A673 (cell line): ENCODE measurements at regions of chr4 and their contacts with region 1.

Region 1: GRCh38 chr4:133641191-133641590 is 492.1 kb downstream of the PCDH10 start:
- DNase-seq: peak; percentile 4
- H3K4me3 ChIP-seq: no peak overlapping the region
- H3K27ac ChIP-seq: no peak overlapping the region
- H3K4me1 ChIP-seq: peaks cover 21% of the 10 kb centered on the region
- H3K27me3 ChIP-seq: no peaks in the 10 kb centered on the region
- CTCF ChIP-seq: no peak

Region 2: DNA sequence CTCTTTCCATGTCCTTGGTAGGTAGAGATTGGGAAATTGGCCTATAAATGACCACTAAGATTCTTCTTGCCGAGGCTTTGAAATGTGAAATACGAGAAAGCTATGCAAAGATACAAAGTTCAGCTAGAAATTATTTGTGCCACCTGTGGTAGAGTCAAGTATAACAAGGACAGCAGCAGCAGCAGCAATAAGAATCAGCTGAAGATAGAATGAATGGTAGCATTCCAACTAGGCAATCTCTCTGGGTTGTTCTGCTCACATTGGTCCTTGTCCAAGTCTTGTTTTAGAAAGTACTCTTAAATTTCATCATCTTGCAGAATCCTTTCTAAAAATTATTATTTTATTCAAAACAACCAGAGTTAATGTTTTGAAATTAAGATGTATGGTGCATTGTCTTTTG is 559.9 kb before region 1 on chr4:
- CTCF ChIA-PET with region 1: no interaction called
- POLR2A ChIA-PET with region 1: no interaction called
- intact Hi-C with region 1: no loop called
- DNase-seq: no peak
- H3K4me3 ChIP-seq: no peak overlapping the region
- H3K27ac ChIP-seq: no peak overlapping the region
- H3K4me1 ChIP-seq: no peaks in the 10 kb centered on the region
- H3K27me3 ChIP-seq: no peaks in the 10 kb centered on the region
- CTCF ChIP-seq: no peak

Region 3: GRCh38 chr4:133154725-133155124 is 486.5 kb before region 1 on chr4:
- CTCF ChIA-PET with region 1: no interaction called
- POLR2A ChIA-PET with region 1: no interaction called
- intact Hi-C with region 1: loop called (anchors 5 kb)
- DNase-seq: peak; percentile 71
- H3K4me3 ChIP-seq: peak overlapping the region; percentile 63
- H3K27ac ChIP-seq: no peak overlapping the region
- H3K4me1 ChIP-seq: peaks cover 11% of the 10 kb centered on the region
- H3K27me3 ChIP-seq: no peaks in the 10 kb centered on the region
- CTCF ChIP-seq: peak; percentile 81

Region 4: DNA sequence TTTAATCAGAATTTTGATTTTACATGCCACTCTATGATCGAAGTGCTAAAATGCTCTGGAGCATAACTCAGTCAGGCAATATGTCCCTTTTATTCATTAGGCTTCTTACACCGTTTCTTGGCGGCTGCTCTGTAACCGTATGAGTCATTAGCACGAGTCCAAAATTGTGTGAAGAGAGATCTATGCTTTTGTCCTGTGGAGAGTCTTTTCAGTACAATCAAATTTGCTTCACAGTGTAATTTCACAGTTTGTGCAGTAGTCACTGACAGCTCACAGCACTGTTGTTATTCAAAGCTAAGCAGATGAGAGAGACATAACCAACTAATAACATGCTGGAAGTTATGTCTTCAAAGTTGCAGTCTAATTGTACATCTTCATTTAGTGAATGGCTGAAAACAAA is 324.3 kb before region 1 on chr4:
- CTCF ChIA-PET with region 1: interaction called, 4 read pairs
- POLR2A ChIA-PET with region 1: no interaction called
- intact Hi-C with region 1: loop called (anchors 10 kb)
- DNase-seq: peak; percentile 69
- H3K4me3 ChIP-seq: no peak overlapping the region
- H3K27ac ChIP-seq: no peak overlapping the region
- H3K4me1 ChIP-seq: peaks cover 13% of the 10 kb centered on the region
- H3K27me3 ChIP-seq: no peaks in the 10 kb centered on the region
- CTCF ChIP-seq: no peak

Region 5: DNA sequence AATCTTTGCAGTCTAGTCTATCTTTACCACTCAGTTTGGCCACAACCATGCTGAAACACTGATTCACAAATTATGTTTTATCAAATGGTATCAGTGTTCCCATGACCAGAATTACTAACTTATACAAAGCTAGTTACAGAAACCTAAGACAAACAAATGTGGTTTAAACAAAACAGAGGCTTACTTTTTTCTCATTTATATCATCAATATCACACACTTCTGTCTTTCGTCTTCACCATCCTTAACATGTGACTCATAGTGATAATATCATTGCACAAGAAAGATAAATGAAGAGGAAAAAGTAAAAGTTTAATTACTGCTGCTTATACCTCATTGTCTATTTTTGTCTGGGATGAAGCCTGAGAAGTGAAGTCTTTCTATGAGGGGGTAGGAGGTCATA is 85.5 kb before region 1 on chr4:
- CTCF ChIA-PET with region 1: no interaction called
- POLR2A ChIA-PET with region 1: no interaction called
- intact Hi-C with region 1: no loop called
- DNase-seq: no peak
- H3K4me3 ChIP-seq: no peak overlapping the region
- H3K27ac ChIP-seq: no peak overlapping the region
- H3K4me1 ChIP-seq: no peaks in the 10 kb centered on the region
- H3K27me3 ChIP-seq: no peaks in the 10 kb centered on the region
- CTCF ChIP-seq: no peak

Region 6: DNA sequence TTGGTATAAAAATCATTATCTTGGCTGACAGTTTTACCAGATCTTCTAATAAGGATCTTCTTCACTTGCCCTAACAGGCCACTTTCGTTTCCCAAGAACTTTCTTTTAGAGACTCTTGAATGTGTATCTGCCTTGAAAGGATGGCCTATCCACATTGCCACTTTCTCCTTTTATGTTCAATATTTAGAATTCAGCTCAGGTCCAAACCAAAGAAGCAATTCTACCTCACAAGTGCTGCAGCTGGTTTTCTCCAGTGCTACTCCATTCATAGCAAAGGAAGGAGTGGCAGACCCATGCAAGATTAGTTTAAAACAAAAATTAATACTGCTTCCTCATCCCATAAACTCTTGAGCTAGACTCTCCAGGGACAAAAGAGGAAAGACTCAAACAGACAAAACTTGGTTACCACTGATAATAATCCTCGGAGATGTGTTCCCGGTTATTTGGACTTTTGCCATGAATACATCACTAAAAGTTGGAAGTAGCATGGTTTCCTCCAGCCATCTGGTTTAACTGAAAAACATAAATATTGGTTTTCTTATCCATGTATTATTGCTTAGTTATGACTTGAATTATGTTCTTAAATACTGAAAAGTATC is 158.6 kb after region 1 on chr4:
- CTCF ChIA-PET with region 1: no interaction called
- POLR2A ChIA-PET with region 1: no interaction called
- intact Hi-C with region 1: loop called (anchors 10 kb)
- DNase-seq: peak; percentile 70
- H3K4me3 ChIP-seq: no peak overlapping the region
- H3K27ac ChIP-seq: peak overlapping the region; percentile 27
- H3K4me1 ChIP-seq: no peaks in the 10 kb centered on the region
- H3K27me3 ChIP-seq: no peaks in the 10 kb centered on the region
- CTCF ChIP-seq: no peak

Region 7: GRCh38 chr4:133839326-133839725 is 198.1 kb after region 1 on chr4:
- CTCF ChIA-PET with region 1: no interaction called
- POLR2A ChIA-PET with region 1: no interaction called
- intact Hi-C with region 1: loop called (anchors 2 kb)
- DNase-seq: peak; percentile 27
- H3K4me3 ChIP-seq: no peak overlapping the region
- H3K27ac ChIP-seq: no peak overlapping the region
- H3K4me1 ChIP-seq: no peaks in the 10 kb centered on the region
- H3K27me3 ChIP-seq: no peaks in the 10 kb centered on the region
- CTCF ChIP-seq: no peak

Region 8: DNA sequence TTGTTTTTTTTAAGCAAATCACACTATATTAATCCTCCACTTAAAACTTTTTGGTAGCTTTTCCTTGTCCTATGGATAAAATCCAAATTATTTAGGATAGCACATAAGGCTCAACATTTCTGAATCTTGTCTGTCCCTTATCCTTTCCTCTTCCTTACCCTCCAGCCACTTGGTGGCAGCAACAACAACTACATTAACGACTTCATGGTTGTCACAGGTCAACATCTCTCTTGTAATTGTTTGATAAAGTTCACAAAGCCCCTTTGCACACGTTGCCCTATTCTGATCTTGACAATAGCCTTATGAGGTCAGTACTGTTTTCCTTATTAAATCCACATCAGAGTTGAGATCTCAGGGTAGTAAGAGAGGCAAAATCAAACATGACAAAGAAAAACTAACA is 829.4 kb after region 1 on chr4:
- CTCF ChIA-PET with region 1: no interaction called
- POLR2A ChIA-PET with region 1: no interaction called
- intact Hi-C with region 1: no loop called
- DNase-seq: peak; percentile 35
- H3K4me3 ChIP-seq: no peak overlapping the region
- H3K27ac ChIP-seq: no peak overlapping the region
- H3K4me1 ChIP-seq: no peaks in the 10 kb centered on the region
- H3K27me3 ChIP-seq: no peaks in the 10 kb centered on the region
- CTCF ChIP-seq: peak; percentile 49